Mammary epithelial cell (primary cell): ENCODE measurements at regions of chr9 and their contacts with region 1.

Region 1: DNA sequence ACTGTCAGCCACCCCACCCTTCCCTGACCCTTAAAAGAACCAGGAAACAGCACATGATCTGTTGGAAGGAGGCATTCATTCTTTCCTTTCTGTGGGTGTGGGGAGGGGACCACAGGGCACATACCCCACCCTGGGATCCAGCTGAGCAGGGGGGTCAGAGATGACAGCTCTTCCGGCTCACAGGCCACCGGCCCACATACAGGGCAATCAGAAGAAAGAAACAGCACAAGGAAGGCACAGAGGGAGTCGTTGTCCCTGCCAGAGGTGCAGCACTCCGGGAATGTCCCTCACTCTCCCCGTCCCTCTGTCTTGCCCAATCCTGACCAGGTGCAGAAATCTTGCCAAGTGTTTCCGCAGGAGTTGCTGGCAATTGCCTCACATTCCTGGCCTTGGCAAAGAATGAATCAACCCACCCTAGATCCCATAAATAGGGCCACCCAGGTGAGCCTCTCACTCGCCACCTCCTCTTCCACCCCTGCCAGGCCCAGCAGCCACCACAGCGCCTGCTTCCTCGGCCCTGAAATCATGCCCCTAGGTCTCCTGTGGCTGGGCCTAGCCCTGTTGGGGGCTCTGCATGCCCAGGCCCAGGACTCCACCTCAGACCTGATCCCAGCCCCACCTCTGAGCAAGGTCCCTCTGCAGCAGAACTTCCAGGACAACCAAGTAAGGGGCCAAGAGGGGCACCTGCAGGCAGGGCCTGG is at the start of gene LCN2:
- DNase-seq: peak; percentile 90
- H3K4me3 ChIP-seq: peak within 1 kb of the TSS in 1 of 3 experiments; percentile 12
- H3K27ac ChIP-seq: no peak within 1 kb of the TSS
- H3K4me1 ChIP-seq: peaks cover 20% of the 10 kb centered on the region
- H3K27me3 ChIP-seq: no peaks in the 10 kb centered on the region
- CTCF ChIP-seq: no peak
- total RNA-seq, gene LCN2: 6.5 to 20.0 TPM

Region 2: DNA sequence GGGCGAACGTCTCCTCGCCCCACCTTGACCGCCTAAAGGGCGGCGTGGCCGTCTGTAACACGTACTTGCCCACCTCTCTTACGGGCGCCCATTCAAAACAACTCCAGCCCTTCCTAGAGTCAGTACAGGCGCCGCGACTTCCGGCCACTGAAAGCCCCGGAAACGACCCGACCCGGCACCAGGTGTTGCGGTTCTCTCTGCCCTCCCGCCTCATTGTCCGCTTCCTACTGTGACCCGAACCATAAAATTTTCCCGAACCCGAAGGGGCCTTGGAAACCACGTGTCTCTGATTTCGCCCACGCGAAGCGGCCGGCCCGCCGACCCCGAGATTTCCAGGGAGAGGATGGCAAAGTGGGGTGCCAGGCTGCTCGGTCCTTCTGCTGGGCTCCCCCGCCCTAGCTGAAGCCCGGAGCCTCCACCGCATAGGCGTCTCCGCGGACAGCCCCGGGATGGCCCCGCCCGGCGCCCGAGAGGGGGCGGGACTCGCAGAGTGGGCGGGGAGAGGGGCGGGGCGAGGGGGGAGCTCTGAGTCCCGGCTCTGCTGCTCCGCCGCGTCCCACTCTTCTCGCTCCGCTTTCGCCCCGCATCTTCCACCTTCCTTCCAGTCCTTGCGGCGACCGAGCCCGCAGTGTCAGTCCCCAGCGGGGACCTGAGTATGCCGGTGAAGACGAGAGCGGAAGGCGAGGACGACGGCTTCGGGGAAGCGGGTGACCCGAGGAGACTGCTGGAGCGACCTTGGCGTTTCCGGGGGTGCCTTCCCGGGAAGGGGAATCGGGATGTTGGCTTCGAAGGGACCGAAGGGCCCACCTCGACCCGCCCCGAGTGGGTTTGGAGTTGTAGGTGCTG is 20.9 kb before region 1 on chr9:
- CTCF ChIA-PET with region 1: no interaction called
- dilution Hi-C with region 1: no loop called
- in situ Hi-C with region 1: no loop called
- intact Hi-C with region 1: loop called (anchors 2 kb)
- DNase-seq: peak; percentile 91
- H3K4me3 ChIP-seq: peak overlapping the region; percentile 64 to 100 (median 91)
- H3K27ac ChIP-seq: peak overlapping the region; percentile 90
- H3K4me1 ChIP-seq: peaks cover 15% of the 10 kb centered on the region
- H3K27me3 ChIP-seq: no peaks in the 10 kb centered on the region
- CTCF ChIP-seq: no peak

Region 3: DNA sequence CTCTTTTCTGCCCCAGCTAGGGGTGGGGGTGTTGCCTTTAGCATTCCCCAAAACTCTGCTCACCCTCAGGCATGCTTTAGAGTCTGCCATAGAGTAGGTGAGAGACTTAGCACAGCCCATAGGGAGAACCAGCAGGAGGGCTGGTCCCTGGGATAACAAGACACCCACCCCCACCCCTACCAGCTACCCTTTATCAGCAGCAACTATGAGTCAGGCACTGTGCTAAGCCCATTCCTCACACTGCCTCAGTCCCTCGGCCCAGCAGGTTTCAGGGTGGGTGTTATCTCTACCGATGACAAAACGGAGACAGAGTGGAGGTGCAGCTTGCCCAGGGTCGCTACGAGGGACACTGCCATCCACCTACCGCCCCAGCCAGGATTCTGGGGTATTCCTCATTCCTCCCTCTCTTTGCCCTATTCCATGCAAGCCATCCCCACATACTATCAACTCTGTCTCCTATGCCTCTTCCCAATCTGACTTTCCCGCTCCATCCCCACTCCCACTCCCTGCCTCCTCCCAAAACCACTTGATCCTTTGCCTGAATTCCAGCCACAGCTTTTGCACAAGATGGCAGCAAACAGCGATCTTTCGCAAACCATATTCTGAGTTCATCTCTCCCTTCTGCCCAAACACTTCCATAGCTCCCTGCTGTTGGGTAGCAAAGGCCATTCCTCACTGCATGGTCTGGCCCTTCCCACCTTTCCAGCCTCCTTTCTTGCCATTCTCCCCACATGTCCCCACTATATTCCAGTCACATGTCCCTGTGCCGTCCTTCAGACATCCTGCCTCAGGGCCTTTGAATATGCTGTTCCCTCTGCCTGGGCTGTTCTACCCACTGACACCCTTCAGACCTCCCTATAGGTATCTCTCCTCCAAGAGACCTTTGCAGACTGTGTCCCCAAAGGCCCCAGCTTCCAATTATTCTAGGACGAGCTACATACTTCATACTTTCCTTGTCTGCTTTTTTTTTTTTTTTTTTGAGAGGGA is 37.1 kb after region 1 on chr9:
- CTCF ChIA-PET with region 1: no interaction called
- dilution Hi-C with region 1: loop called (anchors 5 kb)
- in situ Hi-C with region 1: no loop called
- intact Hi-C with region 1: no loop called
- DNase-seq: no peak
- H3K4me3 ChIP-seq: no peak overlapping the region
- H3K27ac ChIP-seq: no peak overlapping the region
- H3K4me1 ChIP-seq: peaks cover 10% of the 10 kb centered on the region
- H3K27me3 ChIP-seq: no peaks in the 10 kb centered on the region
- CTCF ChIP-seq: no peak

Region 4: DNA sequence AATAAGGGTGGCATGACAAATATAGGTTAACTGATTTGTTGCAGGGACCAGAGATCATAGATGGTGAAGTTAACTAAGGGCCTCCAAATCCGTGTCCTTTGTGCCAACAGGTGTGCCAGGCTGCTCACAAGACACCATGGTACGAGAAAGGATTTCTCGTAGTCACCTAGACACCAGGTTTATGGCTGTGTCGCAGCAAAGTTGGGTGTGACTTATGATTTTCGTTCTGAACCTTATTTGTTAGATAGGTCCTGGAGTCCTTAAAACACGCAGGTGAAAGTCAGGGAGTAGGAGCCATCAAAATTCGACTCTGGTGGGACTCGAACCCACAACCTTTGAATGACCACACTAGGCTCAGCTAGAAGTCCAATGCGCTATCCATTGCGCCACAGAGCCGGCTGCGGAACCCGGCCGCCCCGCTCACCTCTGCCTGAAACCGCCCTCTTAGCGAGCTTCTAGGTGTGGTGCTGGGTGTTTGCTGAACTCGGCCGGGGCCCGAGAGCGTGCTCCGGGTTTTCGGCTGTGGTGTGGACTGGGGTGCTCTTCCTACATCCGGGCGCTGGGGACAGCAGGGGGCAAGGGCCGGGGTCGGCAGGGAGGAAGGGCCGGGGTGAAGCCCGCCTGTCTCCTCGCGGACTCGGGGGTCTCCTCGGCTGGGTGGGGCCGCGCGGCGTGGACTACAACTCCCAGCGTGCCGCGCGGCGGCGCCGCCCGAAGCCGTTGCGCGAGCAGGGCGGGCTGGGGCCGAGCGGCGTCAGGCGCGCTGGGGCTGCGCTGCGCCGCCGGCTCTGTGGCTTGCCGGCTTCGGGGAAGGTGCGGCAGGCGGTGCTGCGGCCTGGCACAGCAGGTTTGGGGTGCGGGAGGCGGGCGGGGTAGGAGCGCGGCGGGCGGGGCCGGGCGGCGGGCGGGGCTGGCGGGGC is 190.9 kb after region 1 on chr9 and contains the start of gene SLC27A4:
- CTCF ChIA-PET with region 1: no interaction called
- dilution Hi-C with region 1: no loop called
- in situ Hi-C with region 1: no loop called
- intact Hi-C with region 1: no loop called
- DNase-seq: peak; percentile 95
- H3K4me3 ChIP-seq: peak within 1 kb of the TSS; percentile 66 to 97 (median 95)
- H3K27ac ChIP-seq: peak within 1 kb of the TSS; percentile 75
- H3K4me1 ChIP-seq: peaks cover 4% of the 10 kb centered on the region
- H3K27me3 ChIP-seq: no peaks in the 10 kb centered on the region
- CTCF ChIP-seq: no peak
- total RNA-seq, gene SLC27A4: 28.2 to 35.2 TPM